ENCODE measurements at regions of chr5 and their contacts with region 1.

Region 1: DNA sequence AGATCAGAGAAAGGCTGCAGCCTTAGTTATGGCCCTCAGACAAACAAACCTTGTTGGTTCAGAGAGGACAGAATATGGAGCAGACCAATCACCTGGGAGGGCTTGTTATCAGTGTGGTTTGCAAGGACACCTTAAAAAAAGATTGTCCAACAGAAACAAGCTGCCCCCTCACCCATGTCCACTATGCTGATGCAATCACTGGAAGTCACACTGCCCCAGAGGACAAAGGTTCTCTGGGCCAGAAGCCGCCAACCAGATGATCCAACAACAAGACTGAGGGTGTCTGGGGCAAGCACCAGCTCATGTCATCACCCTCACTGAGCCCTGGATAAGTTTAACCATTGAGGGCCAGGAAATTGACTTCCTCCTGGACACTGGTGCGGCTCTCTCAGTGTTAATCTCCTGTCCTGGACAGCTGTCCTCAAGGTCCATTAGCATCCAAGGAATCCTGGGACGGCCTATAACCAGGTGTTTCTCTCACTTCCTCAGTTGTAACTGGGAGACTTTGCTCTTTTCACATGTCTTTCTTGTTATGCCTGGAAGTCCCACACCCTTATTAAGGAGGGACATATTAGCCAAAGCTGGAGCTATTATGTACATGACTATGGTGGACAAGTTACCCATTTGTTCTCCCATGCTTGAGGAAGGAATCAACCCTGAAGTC is 36.9 kb upstream of the TBCA start:
- DNase-seq: no peak

Region 2: DNA sequence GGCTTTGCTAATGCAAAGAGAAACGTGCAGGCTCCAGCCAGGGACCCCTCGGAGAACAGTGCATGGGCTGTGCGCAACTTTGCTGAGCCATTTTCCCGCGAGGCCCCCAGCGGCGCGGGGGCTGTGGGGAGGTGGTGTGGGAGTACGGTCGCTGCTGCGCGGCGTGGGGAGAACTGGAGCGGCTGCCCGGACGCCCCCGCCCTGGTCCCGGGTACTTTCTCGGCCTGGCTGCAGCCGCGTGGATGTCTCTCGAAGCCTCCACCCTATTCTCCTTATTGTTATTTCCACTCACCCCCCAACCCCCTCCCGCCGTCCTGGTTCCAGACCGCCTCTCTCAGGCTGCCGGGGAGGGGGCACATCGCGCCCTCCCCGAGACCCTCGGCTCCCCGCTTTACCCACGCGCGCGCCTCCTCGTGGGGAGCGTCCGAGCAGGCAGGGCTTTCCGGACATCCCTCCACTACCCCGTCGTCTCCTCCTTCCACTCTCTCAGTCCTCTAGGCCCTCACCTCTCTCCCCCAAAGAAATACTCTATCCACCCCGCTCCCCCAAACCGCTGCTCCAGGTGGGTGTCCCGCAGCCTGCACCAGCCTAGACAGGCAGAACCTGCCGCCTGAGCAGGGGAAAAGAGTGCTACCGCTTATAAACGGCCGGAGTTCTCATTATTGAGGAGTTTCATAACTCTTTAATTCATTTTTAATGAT is 31.7 kb after region 1 on chr5:
- intact Hi-C with region 1: loop called in 1 of 2 experiments (anchors 5 kb)
- DNase-seq: no peak